ENCODE measurements at regions of chr15 and their contacts with region 1.

Region 1: GRCh38 chr15:75842722-75843551 is at the start of gene UBE2Q2:
- DNase-seq: peak; percentile 71
- H3K4me3 ChIP-seq: peak within 1 kb of the TSS; percentile 74 to 99 (median 83)
- H3K27ac ChIP-seq: peak within 1 kb of the TSS; percentile 85
- H3K4me1 ChIP-seq: peaks cover 19% of the 10 kb centered on the region
- H3K27me3 ChIP-seq: no peaks in the 10 kb centered on the region
- CTCF ChIP-seq: no peak
- POLR2A ChIP-seq: no peak
- total RNA-seq, gene UBE2Q2: 28.5 and 32.8 TPM in 2 replicates

Region 2: GRCh38 chr15:75597667-75598341 is 245.1 kb before region 1 on chr15:
- CTCF ChIA-PET with region 1: no interaction called
- POLR2A ChIA-PET with region 1: no interaction called
- dilution Hi-C with region 1: no loop called
- intact Hi-C with region 1: no loop called
- DNase-seq: peak; percentile 36
- H3K4me3 ChIP-seq: no peak overlapping the region
- H3K27ac ChIP-seq: no peak overlapping the region
- H3K4me1 ChIP-seq: peaks cover 9% of the 10 kb centered on the region
- H3K27me3 ChIP-seq: no peaks in the 10 kb centered on the region
- CTCF ChIP-seq: peak; percentile 15 to 30
- POLR2A ChIP-seq: no peak

Region 3: GRCh38 chr15:75823860-75824613 is 18.9 kb before region 1 on chr15:
- CTCF ChIA-PET with region 1: interaction called, 6 read pairs
- POLR2A ChIA-PET with region 1: no interaction called
- dilution Hi-C with region 1: no loop called
- intact Hi-C with region 1: loop called (anchors 2 kb)
- DNase-seq: peak; percentile 64
- H3K4me3 ChIP-seq: no peak overlapping the region
- H3K27ac ChIP-seq: peak overlapping the region; percentile 78
- H3K4me1 ChIP-seq: peaks cover 13% of the 10 kb centered on the region
- H3K27me3 ChIP-seq: peaks cover 0 to 2% of the 10 kb centered on the region in 2 experiments
- CTCF ChIP-seq: no peak
- POLR2A ChIP-seq: no peak

Region 4: DNA sequence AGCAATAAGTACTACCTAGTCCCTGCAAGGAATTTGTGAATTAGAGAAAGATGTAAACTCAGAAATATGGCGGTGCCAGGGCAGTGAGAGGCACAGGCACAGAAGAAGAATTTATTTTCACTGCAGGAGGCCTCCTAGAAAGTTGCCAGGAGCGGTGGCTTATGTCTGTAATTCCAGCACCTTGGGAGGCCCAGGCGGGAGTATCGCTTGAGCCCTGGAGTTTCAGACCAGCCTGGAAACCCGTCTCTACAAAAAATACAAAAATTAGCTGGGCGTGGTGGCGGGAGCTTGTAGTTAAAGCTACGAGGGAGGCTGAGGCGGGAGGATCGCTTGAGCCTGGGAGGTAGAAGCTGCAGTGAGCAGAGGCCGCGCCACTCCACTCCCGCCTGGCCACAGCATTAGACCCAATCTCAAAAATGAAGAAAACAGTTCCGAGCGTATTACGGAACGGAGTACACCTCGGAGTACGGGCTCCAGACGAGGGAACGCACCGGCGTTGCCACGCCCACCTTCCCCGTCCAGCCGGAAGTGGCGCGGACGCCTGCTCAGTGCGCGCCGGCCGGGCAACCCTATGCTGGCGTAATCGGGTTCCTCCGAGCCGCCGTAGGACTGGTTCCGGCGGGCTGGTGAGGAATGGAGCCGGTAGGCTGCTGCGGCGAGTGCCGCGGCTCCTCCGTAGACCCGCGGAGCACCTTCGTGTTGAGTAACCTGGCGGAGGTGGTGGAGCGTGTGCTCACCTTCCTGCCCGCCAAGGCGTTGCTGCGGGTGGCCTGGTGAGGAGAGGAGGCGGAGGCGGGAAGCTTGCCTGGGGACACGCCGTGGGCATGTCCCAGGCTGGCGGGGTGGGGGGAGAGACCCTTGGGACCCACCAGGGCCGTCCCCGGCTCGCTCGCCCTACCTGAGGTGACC is 60.6 kb after region 1 on chr15 and contains the start of gene FBXO22:
- CTCF ChIA-PET with region 1: interaction called, 3 read pairs
- POLR2A ChIA-PET with region 1: no interaction called
- dilution Hi-C with region 1: no loop called
- intact Hi-C with region 1: loop called (anchors 1 kb)
- DNase-seq: peak; percentile 90
- H3K4me3 ChIP-seq: peak within 1 kb of the TSS; percentile 73 to 87 (median 82)
- H3K27ac ChIP-seq: peak within 1 kb of the TSS; percentile 43
- H3K4me1 ChIP-seq: peaks cover 3% of the 10 kb centered on the region
- H3K27me3 ChIP-seq: no peaks in the 10 kb centered on the region
- CTCF ChIP-seq: no peak
- POLR2A ChIP-seq: peak; percentile 93
- total RNA-seq, gene FBXO22: 41.6 and 42.6 TPM in 2 replicates

Measured in endothelial cell of umbilical vein (primary cell).